Posterior vena cava (tissue), 2 donors: ENCODE measurements at regions of chr9 and their contacts with region 1.

Region 1: GRCh38 chr9:92634712-92635605 is 35.0 kb downstream of the IPPK start:
- DNase-seq: peak; percentile 94

Region 2: DNA sequence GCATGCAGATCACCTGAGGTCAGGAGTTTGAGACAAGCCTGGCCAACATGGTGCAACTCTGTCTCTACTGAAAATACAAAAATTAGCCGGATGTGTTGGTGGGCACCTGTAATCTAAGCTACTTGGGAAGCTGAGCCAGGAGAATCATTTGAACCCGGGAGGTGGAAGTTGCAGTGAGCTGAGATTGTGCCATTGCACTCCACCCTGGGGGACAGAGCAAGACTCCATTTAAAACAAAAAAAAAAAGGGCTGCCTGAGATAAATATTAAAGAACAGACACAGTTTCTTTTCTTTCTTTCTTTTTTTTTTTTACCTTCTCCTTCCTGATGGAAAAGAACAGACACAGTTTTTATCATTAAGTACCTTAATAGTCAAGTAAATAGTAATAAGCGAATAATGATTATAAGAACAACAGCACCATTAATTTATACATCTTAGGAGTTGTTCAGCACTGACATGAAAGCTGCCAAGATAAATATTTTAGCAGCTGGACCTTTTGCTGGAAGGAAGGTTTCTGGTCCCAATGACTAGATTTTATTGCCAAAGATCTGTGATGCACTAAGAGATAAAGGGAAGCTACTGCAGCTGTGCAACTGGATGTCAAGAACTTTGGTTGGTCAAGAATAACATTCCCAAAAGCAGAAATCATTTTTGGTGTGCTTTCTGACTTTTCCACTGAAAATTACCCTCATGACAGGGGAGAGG is 302.2 kb before region 1 on chr9:
- intact Hi-C with region 1: loop called in 1 of 2 experiments (anchors 10 kb)
- DNase-seq: no peak

Region 3: DNA sequence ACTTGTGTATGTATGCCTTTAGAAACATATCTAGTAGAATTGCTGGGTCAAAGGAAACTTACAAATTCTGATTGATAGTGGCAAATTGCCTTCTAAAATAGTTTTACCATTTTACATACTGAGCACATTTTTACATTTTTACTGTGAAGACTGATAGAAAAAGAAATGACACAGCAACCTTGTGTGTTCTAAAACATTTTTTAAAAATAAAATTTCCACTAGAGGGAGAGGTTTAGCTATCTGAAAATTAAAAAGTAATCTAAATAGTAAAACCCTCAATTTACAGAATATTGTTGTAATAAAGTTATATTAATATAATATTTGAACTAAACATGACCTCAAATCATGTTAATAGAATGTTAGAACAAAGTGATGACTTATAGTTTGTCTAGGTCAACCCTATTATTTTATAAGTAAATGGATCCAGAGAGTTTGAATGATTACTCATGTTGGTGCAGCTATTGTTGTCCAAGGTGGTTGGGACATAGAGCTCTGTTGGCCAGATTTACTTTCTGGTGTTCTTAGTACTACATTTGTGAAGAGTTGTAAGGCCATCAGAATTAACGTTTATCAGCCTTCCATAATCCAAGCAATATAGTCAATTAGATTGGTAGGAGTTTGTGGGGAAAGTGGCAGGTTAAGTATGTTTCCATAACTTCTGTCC is 292.0 kb before region 1 on chr9:
- intact Hi-C with region 1: loop called (anchors 5 to 10 kb)
- DNase-seq: no peak